ENCODE measurements at regions of chr13 and their contacts with region 1.

Region 1: GRCh38 chr13:73691891-73692290 is 442.3 kb downstream of the KLF12 start:
- DNase-seq: no peak
- H3K4me3 Mint-ChIP-seq: no peak overlapping the region
- H3K27ac Mint-ChIP-seq: no peak overlapping the region
- H3K4me1 Mint-ChIP-seq: no peaks in the 10 kb centered on the region
- H3K27me3 Mint-ChIP-seq: no peaks in the 10 kb centered on the region

Region 2: GRCh38 chr13:73656863-73657262 is 35.0 kb before region 1 on chr13:
- CTCF ChIA-PET with region 1: no interaction called
- intact Hi-C with region 1: loop called (anchors 1 kb)
- DNase-seq: no peak
- H3K4me3 Mint-ChIP-seq: no peak overlapping the region
- H3K27ac Mint-ChIP-seq: no peak overlapping the region
- H3K4me1 Mint-ChIP-seq: no peaks in the 10 kb centered on the region
- H3K27me3 Mint-ChIP-seq: no peaks in the 10 kb centered on the region

Measured in activated naive CD4-positive, alpha-beta T cell treated with anti-CD3 and anti-CD28 coated beads for 36 hours (primary cell).